Activated CD4-positive, alpha-beta T cell treated with anti-CD3 and anti-CD28 coated beads for 36 hours (primary cell): ENCODE measurements at regions of chr18 and their contacts with region 1.

Region 1: DNA sequence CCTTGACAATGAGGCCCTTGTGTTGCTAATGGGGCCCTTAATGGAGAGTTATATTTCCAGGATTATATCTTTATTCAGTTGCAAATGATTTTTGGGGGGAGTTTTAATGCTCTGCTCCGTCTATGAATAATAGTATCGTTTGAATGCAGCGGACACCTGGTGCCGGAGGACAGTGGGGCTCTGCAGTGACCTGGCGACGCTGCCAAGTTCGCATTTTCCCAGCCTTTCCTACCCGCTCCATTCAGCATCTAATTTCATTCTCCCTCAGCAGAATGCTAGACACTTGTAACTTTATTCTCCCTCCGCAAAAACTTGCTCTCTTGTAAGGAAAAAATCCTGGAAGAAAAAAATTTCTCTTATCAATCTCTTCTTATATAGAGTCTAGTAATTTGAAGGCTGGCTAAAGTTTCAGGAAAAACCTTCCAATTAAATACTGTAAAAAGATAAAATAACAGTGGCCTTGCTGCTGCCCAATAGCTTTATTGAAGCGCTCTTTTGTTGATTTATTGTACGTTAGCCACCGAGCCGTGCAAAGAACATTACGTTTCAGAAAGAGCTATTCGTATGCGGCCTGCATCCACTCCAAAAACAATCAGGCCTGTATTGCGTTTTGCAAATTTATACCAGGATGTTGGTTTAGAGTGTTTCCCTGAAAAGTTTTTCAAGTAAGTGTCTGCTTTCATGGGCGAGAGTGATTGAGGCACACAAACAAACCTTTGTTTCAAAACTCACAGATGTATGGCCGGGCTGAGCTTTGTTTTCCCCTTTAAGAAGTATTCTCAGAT is 257.4 kb upstream of the SALL3 start:
- DNase-seq: no peak
- ATAC-seq: no peak
- H3K4me3 Mint-ChIP-seq: no peak overlapping the region
- H3K27ac Mint-ChIP-seq: no peak overlapping the region
- H3K4me1 Mint-ChIP-seq: no peaks in the 10 kb centered on the region
- H3K27me3 Mint-ChIP-seq: peaks cover 13% of the 10 kb centered on the region

Region 2: DNA sequence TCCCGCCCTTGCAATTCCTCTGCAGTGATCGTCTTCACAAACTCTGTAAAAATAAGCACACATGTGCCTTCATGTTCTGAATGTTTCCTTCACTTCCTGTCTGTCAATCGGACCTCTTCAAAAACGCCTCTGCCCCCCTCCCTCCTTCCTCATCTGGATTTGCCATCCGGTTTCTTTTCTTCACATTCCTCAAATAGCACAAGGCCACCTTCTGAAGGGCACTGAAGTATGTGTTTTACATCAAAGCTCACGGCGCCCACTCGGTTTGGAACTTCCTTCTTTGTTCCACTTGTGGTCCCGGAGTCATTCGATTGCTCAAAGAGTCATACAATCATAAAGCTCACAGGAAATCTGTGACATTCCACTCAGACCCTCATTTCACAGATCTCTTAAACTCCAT is 500.7 kb before region 1 on chr18:
- CTCF ChIA-PET with region 1: no interaction called
- POLR2A ChIA-PET with region 1: no interaction called
- intact Hi-C with region 1: no loop called
- DNase-seq: no peak
- ATAC-seq: no peak
- H3K4me3 Mint-ChIP-seq: no peak overlapping the region
- H3K27ac Mint-ChIP-seq: no peak overlapping the region
- H3K4me1 Mint-ChIP-seq: peaks cover 3% of the 10 kb centered on the region
- H3K27me3 Mint-ChIP-seq: peaks cover 4% of the 10 kb centered on the region

Region 3: GRCh38 chr18:78670778-78671405 is 51.3 kb before region 1 on chr18:
- CTCF ChIA-PET with region 1: no interaction called
- POLR2A ChIA-PET with region 1: no interaction called
- intact Hi-C with region 1: no loop called
- DNase-seq: no peak
- ATAC-seq: no peak
- H3K4me3 Mint-ChIP-seq: no peak overlapping the region
- H3K27ac Mint-ChIP-seq: no peak overlapping the region
- H3K4me1 Mint-ChIP-seq: no peaks in the 10 kb centered on the region
- H3K27me3 Mint-ChIP-seq: no peaks in the 10 kb centered on the region

Region 4: DNA sequence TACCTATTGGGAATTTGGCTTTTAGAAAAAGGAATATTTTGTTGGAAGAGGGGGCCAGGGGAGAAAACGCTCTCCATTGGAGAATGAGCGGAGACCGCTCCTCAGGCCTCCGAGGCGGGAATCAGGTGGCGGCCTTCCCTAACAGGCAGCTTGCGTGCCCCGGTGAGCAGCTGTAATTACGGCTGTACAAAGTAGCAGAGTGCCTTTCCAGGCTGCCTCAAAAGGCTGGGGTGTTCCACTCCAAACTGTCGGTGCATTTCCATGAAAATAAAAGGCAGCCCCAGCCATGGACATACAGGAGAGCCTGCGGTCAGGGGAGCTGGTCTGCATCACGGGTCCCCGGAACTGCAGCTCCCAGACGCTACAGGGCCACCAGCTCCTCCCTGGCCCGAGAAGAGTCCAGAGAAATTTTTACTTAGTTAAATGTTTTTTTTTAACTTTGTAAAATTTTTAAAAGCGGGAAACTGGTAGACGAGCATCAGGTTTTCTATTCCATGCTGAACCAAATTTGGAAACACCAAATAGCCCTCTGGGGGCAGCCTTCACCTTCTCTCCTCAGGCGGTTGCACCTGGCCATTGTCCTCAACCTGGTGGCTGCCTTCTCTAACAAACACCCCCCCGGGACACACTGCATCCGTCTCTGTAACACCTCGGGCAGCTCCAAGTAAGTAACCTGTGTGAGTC is 48.1 kb after region 1 on chr18:
- CTCF ChIA-PET with region 1: no interaction called
- POLR2A ChIA-PET with region 1: no interaction called
- intact Hi-C with region 1: loop called in 1 of 2 experiments (anchors 10 kb)
- DNase-seq: no peak
- ATAC-seq: no peak
- H3K4me3 Mint-ChIP-seq: no peak overlapping the region
- H3K27ac Mint-ChIP-seq: no peak overlapping the region
- H3K4me1 Mint-ChIP-seq: no peaks in the 10 kb centered on the region
- H3K27me3 Mint-ChIP-seq: no peaks in the 10 kb centered on the region

Region 5: GRCh38 chr18:78893278-78894035 is 171.3 kb after region 1 on chr18:
- CTCF ChIA-PET with region 1: no interaction called
- POLR2A ChIA-PET with region 1: no interaction called
- intact Hi-C with region 1: no loop called
- DNase-seq: no peak
- ATAC-seq: no peak
- H3K4me3 Mint-ChIP-seq: no peak overlapping the region
- H3K27ac Mint-ChIP-seq: no peak overlapping the region
- H3K4me1 Mint-ChIP-seq: no peaks in the 10 kb centered on the region
- H3K27me3 Mint-ChIP-seq: no peaks in the 10 kb centered on the region